ENCODE measurements at regions of chr4 and their contacts with region 1.

Region 1: DNA sequence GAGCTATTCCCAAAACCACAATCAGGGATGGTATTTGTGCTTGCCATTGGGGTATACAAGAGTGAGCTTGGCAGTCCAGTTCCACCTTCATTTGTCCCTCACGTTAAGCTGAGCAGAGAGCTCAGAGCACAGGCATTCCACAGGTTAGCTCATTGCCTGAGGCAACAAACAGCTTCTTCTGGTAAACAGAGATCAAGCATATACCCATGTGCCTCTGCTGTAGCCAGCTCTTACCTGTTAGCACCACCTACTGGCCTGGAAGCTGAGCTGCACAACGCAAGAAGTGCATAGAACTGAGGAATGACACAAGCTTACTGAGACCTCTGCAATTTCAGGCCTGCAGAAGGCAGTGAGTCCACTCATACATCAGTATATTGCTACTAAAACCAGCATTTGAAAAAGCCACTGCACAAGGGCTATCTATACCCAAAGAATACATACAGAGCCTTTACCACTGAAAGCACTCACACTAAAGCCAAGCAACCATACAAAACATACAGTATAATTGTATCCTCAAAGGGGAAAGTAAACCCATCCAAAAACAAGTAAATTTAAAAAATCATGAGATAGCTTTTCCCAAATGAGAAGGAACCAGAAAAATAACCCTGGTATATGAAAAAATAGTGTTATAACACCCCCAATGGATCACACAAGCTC is 258.3 kb upstream of the GABRA2 start:
- ATAC-seq: peak in 5 of 8 experiments; percentile 58 to 100 (median 99)
- H3K4me3 ChIP-seq: no peak overlapping the region
- H3K27ac ChIP-seq: no peak overlapping the region
- H3K4me1 ChIP-seq: no peaks in the 10 kb centered on the region

Region 2: GRCh38 chr4:46329118-46329976 is 318.9 kb before region 1 on chr4:
- in situ Hi-C with region 1: loop called in 1 of 9 experiments (anchors 25 kb)
- ATAC-seq: peak; percentile 76 to 99 (median 90)
- H3K4me3 ChIP-seq: no peak overlapping the region
- H3K27ac ChIP-seq: no peak overlapping the region
- H3K4me1 ChIP-seq: no peaks in the 10 kb centered on the region

Region 3: DNA sequence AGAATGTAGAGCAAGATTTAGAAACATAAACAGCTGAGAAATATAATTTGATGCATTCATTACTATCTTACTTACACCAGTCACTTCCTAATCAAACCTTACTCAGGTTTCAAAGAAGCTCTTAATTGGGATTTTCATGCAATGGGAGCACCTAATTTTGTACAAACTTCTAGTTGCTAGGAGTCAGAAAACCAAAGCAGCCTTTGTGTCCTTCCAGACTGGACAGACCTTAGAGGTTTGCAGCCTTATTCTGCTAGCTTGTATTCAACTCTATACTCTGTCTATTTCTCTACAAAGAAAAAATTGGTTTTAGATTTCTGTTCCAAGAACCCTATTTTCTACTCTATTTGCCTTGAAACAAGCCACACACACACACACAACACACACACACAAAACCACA is 277.7 kb before region 1 on chr4:
- in situ Hi-C with region 1: loop called in 1 of 9 experiments (anchors 25 kb)
- ATAC-seq: no peak
- H3K4me3 ChIP-seq: no peak overlapping the region
- H3K27ac ChIP-seq: no peak overlapping the region
- H3K4me1 ChIP-seq: no peaks in the 10 kb centered on the region